AG04450 (cell line): ENCODE measurements at regions of chr12 and their contacts with region 1.

Region 1: DNA sequence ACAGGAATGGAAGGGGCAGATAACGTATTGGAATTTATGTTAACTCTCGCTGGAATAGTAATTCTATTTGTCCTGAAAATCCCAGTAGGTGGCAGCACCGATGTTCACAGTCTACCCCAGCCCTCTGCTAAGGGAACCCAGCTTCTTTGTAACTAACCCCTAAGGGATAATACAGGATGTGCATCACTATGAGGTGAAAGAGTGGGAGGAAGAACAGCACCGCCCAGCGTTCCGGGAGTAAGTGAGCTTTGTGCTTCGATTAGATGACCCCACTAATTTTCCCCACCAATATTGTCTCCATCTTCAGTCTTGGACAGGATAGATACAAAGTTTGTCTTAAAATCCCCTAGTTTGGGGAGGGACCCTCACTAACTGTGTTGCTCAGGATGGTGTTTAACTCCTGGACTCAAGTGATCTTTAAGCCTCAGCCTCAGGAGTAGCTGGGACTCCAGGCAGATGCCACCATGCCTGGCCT is 2.7 kb downstream of the SLC2A3 start:
- DNase-seq: peak; percentile 91
- H3K4me3 ChIP-seq: peak overlapping the region; percentile 93
- H3K27ac ChIP-seq: peak overlapping the region; percentile 42
- H3K27me3 ChIP-seq: no peaks in the 10 kb centered on the region
- CTCF ChIP-seq: peak; percentile 81

Region 2: DNA sequence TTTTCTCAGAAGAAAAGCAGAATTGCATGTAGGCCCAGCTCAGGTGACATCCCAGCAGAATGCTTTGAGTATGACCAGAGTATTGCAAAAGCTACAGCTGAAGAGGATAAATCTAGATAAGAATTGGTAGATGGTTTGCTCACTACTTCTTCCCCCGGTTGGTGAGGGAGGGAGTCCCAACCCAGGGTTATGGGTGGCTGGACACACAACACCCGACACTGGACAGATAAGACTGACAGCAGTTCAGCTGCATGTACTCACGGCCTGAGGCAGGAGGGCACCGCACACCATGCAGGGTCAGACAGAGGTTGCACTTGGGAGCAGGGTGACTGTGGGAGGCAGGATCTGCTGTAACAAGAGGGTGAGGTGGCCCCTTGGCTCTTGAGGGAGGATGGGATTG is 184.4 kb before region 1 on chr12:
- CTCF ChIA-PET with region 1: no interaction called
- POLR2A ChIA-PET with region 1: no interaction called
- DNase-seq: no peak
- H3K4me3 ChIP-seq: no peak overlapping the region
- H3K27ac ChIP-seq: no peak overlapping the region
- H3K27me3 ChIP-seq: no peaks in the 10 kb centered on the region
- CTCF ChIP-seq: no peak

Region 3: DNA sequence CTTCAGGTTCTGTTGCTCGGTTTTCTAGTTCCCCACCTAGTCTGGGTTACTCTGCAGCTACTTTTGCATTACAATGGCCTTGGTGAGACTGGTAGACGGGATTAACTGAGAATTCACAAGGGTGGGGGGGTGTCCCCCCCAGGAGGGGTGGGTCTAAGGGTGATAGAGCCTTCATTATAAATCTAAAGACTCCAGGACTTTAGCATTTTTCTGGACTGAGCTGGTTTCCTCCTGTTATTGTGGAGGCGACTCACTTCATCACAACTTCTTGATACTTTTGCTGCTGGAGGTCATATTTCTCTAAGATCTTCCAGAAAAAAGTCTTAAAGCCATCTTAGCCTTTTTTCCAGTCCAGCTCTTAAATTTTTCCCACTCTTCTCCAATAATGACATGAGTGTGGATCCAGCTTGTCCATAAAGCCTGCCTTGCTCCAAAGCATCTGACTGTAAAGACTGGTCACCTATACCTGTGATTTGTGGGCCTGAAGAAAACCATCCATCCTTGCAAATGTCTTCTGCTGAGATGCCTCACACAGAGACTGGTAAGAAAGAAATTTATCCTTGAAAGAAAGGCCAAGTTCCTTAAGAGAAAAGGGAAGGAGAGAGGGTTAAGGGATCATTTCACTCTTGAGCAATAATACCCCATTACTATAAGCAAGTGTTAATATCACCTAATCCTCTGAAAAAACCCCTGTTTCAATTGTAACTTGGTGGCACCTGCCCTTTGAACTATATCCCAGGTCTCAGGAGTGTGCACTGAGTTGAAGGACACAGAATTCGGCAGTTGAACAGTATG is 40.9 kb before region 1 on chr12:
- CTCF ChIA-PET with region 1: interaction called, 25 read pairs
- POLR2A ChIA-PET with region 1: interaction called, 4 read pairs
- DNase-seq: no peak
- H3K4me3 ChIP-seq: no peak overlapping the region
- H3K27ac ChIP-seq: no peak overlapping the region
- H3K27me3 ChIP-seq: no peaks in the 10 kb centered on the region
- CTCF ChIP-seq: no peak

Region 4: GRCh38 chr12:7970475-7971252 is 37.4 kb after region 1 on chr12:
- CTCF ChIA-PET with region 1: interaction called, 10 read pairs
- POLR2A ChIA-PET with region 1: interaction called, 34 read pairs
- DNase-seq: peak; percentile 68
- H3K4me3 ChIP-seq: peak overlapping the region; percentile 58
- H3K27ac ChIP-seq: peak overlapping the region; percentile 89
- H3K27me3 ChIP-seq: no peaks in the 10 kb centered on the region
- CTCF ChIP-seq: no peak; the same call in 1 of the 2 replicates

Region 5: DNA sequence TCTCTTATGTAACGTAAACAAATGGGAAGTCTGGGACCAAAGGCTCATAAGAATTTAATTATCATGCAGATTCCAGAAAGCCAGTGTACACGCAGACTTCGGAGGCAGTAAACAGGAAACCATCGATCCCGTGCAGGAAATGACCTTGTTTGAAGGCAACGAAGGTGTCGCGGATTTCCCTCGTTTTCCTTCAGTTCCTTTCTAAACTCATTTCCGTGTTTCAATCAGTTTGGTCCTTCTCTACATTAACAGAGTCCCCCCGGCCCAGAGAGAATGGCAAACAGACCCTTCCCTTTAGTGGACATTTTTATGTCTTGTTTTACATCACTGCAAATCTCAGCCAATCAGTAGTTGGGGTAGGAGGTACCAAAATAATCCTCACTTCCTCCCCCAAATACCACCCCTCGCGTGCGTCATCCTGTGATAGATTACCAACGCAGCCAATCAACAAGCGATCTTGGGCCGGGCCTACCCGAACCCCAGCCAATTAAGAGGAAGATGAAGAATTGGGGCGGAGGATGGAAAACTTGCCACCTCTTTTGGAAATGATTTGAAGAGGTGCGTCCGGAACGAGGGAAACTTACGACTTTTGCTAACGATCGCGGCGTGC is 93.1 kb after region 1 on chr12:
- CTCF ChIA-PET with region 1: interaction called, 12 read pairs
- POLR2A ChIA-PET with region 1: interaction called, 4 read pairs
- DNase-seq: peak; percentile 97
- H3K4me3 ChIP-seq: peak overlapping the region; percentile 81
- H3K27ac ChIP-seq: peak overlapping the region; percentile 100
- H3K27me3 ChIP-seq: no peaks in the 10 kb centered on the region
- CTCF ChIP-seq: no peak

Region 6: DNA sequence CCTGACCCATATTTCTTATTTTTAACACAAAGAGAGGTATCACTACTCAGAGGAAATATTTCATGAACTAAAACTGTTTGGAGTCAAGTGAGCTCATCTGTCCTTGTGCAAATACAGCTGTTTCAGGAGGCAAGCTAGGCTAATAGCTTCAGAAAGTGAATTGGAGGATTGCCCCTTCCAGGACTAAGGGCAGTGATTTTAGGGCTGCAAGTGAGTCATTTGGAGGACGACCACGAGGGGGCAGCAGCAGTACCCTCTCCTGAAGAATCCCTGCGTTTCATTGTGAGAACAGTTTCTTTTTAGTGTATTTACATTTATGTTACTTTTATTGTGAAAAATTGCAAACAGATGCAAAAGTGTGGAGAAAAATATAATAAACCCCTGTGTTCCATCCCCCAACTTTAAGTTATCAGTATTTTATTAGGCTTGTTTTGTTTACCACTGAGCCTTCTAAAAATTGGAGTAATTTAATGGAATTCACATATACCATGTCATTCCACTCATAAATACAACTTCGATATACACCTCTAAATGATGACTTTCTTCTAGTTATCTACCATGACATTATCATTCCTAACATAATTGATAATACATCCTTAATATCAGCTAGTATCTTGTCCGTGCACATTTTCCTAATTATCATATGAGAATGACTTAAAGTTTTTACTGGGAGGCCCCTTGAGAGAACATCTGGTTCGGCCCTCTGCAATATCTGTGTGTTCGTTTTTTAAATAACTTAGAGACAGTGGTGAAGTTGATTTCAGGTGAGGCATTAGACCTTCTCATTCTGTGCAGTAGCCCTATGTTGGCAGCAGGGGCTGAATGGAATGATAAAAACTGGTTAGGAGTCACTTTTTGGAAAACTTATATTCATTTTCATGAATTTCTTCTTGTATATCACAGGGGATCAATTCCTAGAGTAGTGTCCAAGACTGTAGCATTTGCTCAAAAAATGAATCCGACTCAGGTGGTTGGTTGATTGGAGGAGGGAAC is 113.0 kb after region 1 on chr12:
- CTCF ChIA-PET with region 1: interaction called, 15 read pairs
- POLR2A ChIA-PET with region 1: no interaction called
- DNase-seq: peak; percentile 82
- H3K4me3 ChIP-seq: no peak overlapping the region
- H3K27ac ChIP-seq: no peak overlapping the region
- H3K27me3 ChIP-seq: no peaks in the 10 kb centered on the region
- CTCF ChIP-seq: peak; percentile 94

Region 7: GRCh38 chr12:8096281-8096915 is 163.1 kb after region 1 on chr12:
- CTCF ChIA-PET with region 1: no interaction called
- POLR2A ChIA-PET with region 1: no interaction called
- DNase-seq: no peak
- H3K4me3 ChIP-seq: no peak overlapping the region
- H3K27ac ChIP-seq: no peak overlapping the region
- H3K27me3 ChIP-seq: no peaks in the 10 kb centered on the region
- CTCF ChIP-seq: no peak